Left cardiac atrium (tissue), 4 donors: ENCODE measurements at regions of chr5 and their contacts with region 1.

Region 1: GRCh38 chr5:1641560-1642166 is 117.9 kb upstream of the LPCAT1 start:
- DNase-seq: peak; percentile 83
- ATAC-seq: peak; percentile 63 to 79

Region 2: GRCh38 chr5:1167728-1168709 is 473.6 kb before region 1 on chr5:
- intact Hi-C with region 1: loop called (anchors 5 to 10 kb)
- DNase-seq: peak; percentile 78
- ATAC-seq: peak; percentile 76 to 87

Region 3: GRCh38 chr5:1385395-1386273 is 256.0 kb before region 1 on chr5:
- intact Hi-C with region 1: loop called in 1 of 2 experiments (anchors 10 kb)
- DNase-seq: peak; percentile 90
- ATAC-seq: peak; percentile 97 to 98

Region 4: GRCh38 chr5:1479581-1480188 is 162.0 kb before region 1 on chr5:
- intact Hi-C with region 1: loop called in 1 of 2 experiments (anchors 10 kb)
- DNase-seq: no peak
- ATAC-seq: peak; percentile 16 to 56

Region 5: GRCh38 chr5:1522908-1523770 is 118.5 kb before region 1 on chr5:
- intact Hi-C with region 1: no loop called
- DNase-seq: peak; percentile 31
- ATAC-seq: peak; percentile 25 to 27